Upper lobe of right lung (tissue), 1 donor: ENCODE measurements at regions of chr20 and their contacts with region 1.

Region 1: DNA sequence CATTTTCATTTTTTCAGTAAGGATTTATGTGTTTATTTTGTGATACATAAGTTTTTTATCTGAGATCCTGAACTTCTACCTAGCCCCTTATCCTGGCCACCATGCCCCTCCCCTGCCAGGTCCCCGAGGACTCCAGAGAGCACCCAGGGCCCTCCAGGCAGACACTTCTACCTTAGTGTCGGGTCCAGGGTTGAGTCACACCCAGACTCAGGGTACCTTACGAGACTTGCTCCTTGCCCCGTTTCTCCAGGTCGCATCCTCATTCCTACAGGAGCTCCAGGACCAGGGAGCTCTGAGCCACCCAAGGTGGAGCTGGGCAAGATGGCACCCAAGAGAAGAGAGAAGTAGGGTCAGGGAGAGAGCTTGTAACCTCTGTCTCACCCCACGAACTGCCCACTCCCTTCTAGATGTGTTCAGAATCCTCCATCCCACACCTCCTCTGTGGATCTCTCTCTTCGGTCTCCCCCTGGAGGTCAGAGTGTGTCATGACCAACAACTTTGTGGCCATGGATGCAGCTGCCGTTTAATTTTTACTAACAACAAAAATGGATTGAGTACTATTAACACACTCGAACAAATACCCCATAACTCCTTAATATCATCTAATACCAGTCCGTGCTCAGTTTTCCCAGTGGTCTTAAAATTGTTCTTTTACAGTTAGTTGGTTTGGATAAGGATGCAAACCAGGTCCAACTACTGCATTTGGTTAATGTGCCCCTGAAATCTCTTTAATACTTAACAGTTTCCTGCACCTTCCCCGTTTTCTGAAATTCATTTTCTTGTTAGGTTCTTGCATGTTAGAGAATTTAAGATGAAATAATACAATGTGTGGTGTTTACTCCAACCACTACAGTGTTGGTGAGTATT is 130.6 kb upstream of the INSM1 start:
- DNase-seq: no peak
- ATAC-seq: peak; percentile 93
- H3K4me3 ChIP-seq: no peak overlapping the region
- H3K27ac ChIP-seq: no peak overlapping the region
- H3K4me1 ChIP-seq: no peaks in the 10 kb centered on the region
- H3K27me3 ChIP-seq: no peaks in the 10 kb centered on the region
- CTCF ChIP-seq: peak; percentile 76

Region 2: DNA sequence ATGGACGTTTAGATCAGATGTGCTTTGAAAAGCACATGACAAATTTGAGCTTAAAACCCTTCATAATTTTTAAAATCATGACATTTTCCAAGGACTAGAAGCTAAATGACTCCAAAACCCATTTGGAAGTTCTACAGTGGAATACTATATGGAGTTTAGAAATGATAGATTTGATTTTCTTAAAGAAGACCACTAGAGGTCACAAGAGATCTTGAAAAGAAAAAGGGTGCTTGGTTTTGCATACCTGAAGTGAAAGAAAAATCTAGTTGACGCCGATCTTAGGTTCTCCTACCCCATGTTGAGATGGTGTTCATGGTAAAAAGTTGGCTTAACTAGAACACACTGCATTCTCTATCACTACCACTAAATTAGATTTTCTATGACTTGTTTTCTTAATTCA is 153.5 kb before region 1 on chr20:
- intact Hi-C with region 1: loop called (anchors 10 kb)
- DNase-seq: no peak
- ATAC-seq: peak; percentile 69
- H3K4me3 ChIP-seq: no peak overlapping the region
- H3K27ac ChIP-seq: no peak overlapping the region
- H3K4me1 ChIP-seq: no peaks in the 10 kb centered on the region
- H3K27me3 ChIP-seq: peaks cover 4% of the 10 kb centered on the region
- CTCF ChIP-seq: peak; percentile 57

Region 3: DNA sequence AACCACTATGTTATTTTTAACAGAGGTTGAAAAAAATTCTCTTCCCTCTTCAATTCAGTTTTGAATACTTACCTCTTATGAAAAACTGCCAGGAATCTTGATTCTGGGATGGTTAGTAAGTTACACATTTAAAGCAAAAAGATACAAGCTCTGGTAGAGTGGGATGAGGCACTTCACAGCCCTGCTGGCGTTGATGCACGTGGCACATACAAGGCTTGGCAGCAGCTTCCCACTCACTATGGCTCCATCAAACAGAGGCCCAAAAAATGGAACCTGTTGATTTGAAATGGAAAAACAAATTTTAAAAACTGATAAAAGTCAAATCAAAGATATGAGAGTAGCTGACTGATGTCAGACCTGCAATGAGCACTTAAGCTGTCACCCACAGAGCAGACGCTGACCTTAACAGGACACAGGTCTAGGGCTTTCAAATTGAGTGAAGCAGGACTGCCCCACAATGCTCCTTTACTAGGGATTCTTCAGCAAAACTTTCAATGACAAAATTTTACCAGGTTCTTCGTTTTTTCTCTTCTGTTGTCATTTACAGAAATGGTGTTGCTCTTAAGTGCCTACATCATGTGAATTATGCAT is 235.5 kb after region 1 on chr20:
- intact Hi-C with region 1: no loop called
- DNase-seq: no peak
- ATAC-seq: no peak
- H3K4me3 ChIP-seq: no peak overlapping the region
- H3K27ac ChIP-seq: no peak overlapping the region
- H3K4me1 ChIP-seq: no peaks in the 10 kb centered on the region
- H3K27me3 ChIP-seq: no peaks in the 10 kb centered on the region
- CTCF ChIP-seq: no peak